CD4-positive, alpha-beta memory T cell (primary cell): ENCODE measurements at regions of chr19 and their contacts with region 1.

Region 1: GRCh38 chr19:2648528-2648937 is 54.0 kb downstream of the GNG7 start:
- DNase-seq: peak; percentile 63 to 76 (median 68)
- H3K4me3 ChIP-seq: no peak overlapping the region
- H3K4me3 Mint-ChIP-seq: no peak overlapping the region
- H3K27ac ChIP-seq: no peak overlapping the region
- H3K27ac Mint-ChIP-seq: no peak overlapping the region
- H3K4me1 ChIP-seq: no peaks in the 10 kb centered on the region
- H3K4me1 Mint-ChIP-seq: peaks cover 0 to 1% (median 0%) of the 10 kb centered on the region in 4 donors
- H3K27me3 ChIP-seq: no peaks in the 10 kb centered on the region
- H3K27me3 Mint-ChIP-seq: no peaks in the 10 kb centered on the region

Region 2: DNA sequence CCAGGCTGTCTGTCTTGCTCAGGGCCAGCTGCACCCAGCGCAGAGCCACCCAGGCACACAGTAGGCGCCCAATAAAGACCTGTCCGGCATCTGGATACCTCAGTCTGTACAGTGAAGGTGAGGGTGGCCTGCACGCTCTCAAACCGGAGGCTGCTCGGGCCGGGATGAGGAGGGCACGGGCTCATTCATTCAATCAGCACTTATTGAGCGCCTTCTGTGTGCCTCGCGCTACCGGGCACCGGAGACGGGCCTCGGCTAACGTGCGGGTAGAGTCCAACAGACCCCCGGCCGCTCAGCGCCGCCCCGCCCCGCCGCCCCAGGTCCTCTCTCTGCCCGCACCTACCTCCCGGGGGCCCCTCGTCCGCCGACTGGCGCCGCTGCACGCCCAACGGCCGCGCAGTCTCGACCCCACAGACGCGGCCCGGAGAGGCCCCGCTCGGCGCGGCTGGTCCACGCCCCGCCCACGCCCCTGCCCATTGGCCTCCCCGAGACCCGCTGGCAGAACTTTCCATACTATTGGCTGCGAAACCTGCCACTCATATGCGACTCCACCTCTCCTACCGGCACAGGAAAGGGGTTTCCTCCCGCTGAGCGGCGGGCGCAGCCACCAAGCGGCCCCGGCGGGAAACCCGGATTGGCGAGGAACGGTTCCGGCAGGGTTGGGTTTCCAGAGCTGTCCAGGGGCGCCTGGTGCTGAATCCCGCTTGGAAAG is 91.2 kb after region 1 on chr19 and contains the start of gene SLC39A3:
- CTCF ChIA-PET with region 1: interaction called, 10 read pairs
- POLR2A ChIA-PET with region 1: interaction called, 6 read pairs
- intact Hi-C with region 1: no loop called
- DNase-seq: peak; percentile 97 to 99 (median 98)
- H3K4me3 ChIP-seq: peak within 1 kb of the TSS; percentile 57 to 73
- H3K4me3 Mint-ChIP-seq: peak within 1 kb of the TSS; percentile 80 to 90 (median 87)
- H3K27ac ChIP-seq: peak within 1 kb of the TSS; percentile 52
- H3K27ac Mint-ChIP-seq: peak within 1 kb of the TSS; percentile 29 to 80 (median 75)
- H3K4me1 ChIP-seq: peaks cover 18% of the 10 kb centered on the region
- H3K4me1 Mint-ChIP-seq: peaks cover 12 to 39% (median 17%) of the 10 kb centered on the region in 4 donors
- H3K27me3 ChIP-seq: peaks cover 4% of the 10 kb centered on the region
- H3K27me3 Mint-ChIP-seq: peaks cover 2 to 12% of the 10 kb centered on the region in 2 donors
- total RNA-seq, gene SLC39A3: 18.2 to 19.1 TPM

Region 3: DNA sequence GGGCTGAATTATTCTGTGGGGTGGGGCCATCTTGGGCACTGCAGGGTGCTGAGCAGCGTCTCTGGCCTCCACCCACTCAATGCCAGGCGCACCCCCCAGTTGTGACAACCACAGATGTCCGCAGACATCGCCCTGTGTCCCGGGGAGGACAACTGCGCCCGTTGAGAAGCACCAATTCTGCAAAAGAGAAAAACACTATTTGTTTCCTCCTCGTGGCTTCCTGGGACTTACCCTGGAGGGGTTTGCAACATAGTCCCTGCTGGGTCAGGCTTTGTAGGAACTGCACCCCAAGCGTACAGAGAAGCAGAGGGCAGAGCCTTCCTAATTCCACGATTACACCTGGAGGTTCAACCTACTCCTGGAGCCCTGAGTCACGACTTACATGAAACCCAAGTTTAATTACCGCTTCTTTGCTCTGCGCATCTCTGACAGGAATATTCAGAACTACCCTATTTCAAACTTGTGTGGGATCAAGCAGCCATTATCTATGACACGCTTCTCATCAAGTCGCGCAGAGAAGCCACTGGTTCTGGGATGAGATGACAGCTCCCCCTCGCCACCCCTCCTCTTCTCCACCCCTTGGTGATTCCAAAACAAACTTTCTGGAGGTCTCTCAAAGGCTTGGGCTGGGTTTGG is 102.4 kb after region 1 on chr19:
- CTCF ChIA-PET with region 1: interaction called, 94 read pairs
- POLR2A ChIA-PET with region 1: interaction called, 9 read pairs
- intact Hi-C with region 1: no loop called
- DNase-seq: no peak
- H3K4me3 ChIP-seq: no peak overlapping the region
- H3K4me3 Mint-ChIP-seq: no peak overlapping the region
- H3K27ac ChIP-seq: no peak overlapping the region
- H3K27ac Mint-ChIP-seq: no peak overlapping the region
- H3K4me1 ChIP-seq: peaks cover 4% of the 10 kb centered on the region
- H3K4me1 Mint-ChIP-seq: no peaks in the 10 kb centered on the region
- H3K27me3 ChIP-seq: no peaks in the 10 kb centered on the region
- H3K27me3 Mint-ChIP-seq: no peaks in the 10 kb centered on the region

Region 4: DNA sequence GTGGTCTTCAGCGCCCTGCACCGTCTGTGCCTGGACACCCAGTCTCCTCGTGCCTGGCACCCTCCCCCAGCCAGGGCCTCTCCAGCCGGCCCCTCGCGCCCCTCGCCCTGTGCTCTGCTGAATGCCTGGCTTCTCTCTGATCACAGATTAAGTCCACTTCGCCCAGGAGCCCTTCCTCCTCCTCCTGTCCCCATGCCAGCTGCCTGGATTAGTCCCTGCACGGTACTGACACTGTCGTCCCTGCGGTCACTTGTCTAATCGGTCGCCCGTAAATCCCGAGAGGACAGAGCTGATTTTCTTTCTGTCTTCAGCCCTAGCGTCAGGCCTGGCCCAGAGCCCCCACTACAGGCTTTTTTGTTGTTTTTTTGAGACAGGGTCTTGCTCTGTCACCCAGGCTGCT is 143.3 kb after region 1 on chr19:
- CTCF ChIA-PET with region 1: no interaction called
- POLR2A ChIA-PET with region 1: no interaction called
- intact Hi-C with region 1: no loop called
- DNase-seq: no peak
- H3K4me3 ChIP-seq: no peak overlapping the region
- H3K4me3 Mint-ChIP-seq: no peak overlapping the region
- H3K27ac ChIP-seq: no peak overlapping the region
- H3K27ac Mint-ChIP-seq: peak overlapping the region in 2 of 7 donors; percentile 23 to 48
- H3K4me1 ChIP-seq: no peaks in the 10 kb centered on the region
- H3K4me1 Mint-ChIP-seq: peaks cover 0 to 13% (median 6%) of the 10 kb centered on the region in 4 donors
- H3K27me3 ChIP-seq: no peaks in the 10 kb centered on the region
- H3K27me3 Mint-ChIP-seq: no peaks in the 10 kb centered on the region

Region 5: DNA sequence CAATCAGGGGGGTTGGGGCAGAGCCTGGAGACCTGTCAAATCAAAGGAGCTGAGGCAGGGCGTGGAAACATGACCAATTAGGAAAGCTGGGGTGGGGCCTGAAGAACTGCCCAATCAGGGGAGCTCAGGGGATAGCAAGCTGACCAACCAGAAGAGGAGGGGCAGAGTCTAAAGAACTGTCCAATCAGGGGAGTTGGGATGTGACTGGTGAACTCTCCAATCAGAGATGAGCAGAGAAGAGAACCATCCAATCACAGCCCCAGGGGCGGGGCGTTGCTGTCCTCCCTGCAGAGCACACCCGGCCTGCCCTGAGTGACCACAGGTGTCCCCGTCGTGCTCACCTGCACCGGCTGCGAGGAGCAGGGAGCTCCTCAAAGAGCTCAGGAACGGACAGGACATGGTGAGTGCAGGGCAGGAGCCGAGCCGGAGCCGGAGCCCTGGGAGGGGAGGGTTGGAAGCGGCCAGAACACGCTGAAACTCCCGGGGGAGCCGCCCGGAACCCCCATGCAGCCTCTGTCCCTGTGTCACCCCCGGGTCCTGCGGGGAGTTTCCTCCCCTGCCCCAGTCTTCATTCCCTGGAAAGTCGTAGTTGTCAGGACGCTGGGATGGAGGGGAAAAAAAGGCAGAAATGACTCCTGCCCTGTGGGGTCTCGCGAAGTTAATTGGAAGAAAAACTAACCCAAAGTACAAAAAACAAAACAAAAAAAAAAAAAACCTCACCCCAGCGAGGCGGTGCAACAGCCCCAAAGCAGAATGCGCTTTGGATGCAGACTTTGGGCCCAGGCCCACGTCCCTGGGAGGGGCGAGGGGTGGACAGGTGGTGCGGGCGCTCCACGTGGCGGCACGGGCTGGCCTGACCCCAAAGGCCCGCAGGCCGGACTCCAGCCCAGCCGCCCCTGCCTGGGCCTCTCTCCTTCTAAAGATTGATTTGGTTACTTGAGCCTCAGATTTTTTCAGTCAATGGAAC is 218.8 kb after region 1 on chr19 and contains the start of gene ZNF556:
- CTCF ChIA-PET with region 1: interaction called, 31 read pairs
- POLR2A ChIA-PET with region 1: no interaction called
- intact Hi-C with region 1: no loop called
- DNase-seq: no peak
- H3K4me3 ChIP-seq: no peak within 1 kb of the TSS
- H3K4me3 Mint-ChIP-seq: no peak within 1 kb of the TSS
- H3K27ac ChIP-seq: no peak within 1 kb of the TSS
- H3K27ac Mint-ChIP-seq: no peak within 1 kb of the TSS
- H3K4me1 ChIP-seq: no peaks in the 10 kb centered on the region
- H3K4me1 Mint-ChIP-seq: peaks cover 0 to 4% (median 2%) of the 10 kb centered on the region in 4 donors
- H3K27me3 ChIP-seq: no peaks in the 10 kb centered on the region
- H3K27me3 Mint-ChIP-seq: peaks cover 6% of the 10 kb centered on the region in 2 donors
- total RNA-seq, gene ZNF556: not detected